ENCODE measurements at regions of chr3 and their contacts with region 1.

Region 1: GRCh38 chr3:48685602-48686511 is at the start of gene NCKIPSD:
- DNase-seq: peak; percentile 94
- ATAC-seq: peak; percentile 92
- H3K4me3 Mint-ChIP-seq: peak within 1 kb of the TSS; percentile 90
- H3K27ac Mint-ChIP-seq: peak within 1 kb of the TSS; percentile 86
- H3K4me1 Mint-ChIP-seq: peaks cover 30% of the 10 kb centered on the region
- H3K27me3 Mint-ChIP-seq: no peaks in the 10 kb centered on the region
- CTCF ChIP-seq: peak; percentile 24
- total RNA-seq, gene NCKIPSD: 9.2 and 9.7 TPM in 2 replicates

Region 2: GRCh38 chr3:48400824-48401433 is 284.9 kb before region 1 on chr3:
- CTCF ChIA-PET with region 1: interaction called, 5 read pairs
- POLR2A ChIA-PET with region 1: no interaction called
- intact Hi-C with region 1: loop called (anchors 1 kb)
- DNase-seq: peak; percentile 24
- ATAC-seq: peak; percentile 94
- H3K4me3 Mint-ChIP-seq: no peak overlapping the region
- H3K27ac Mint-ChIP-seq: no peak overlapping the region
- H3K4me1 Mint-ChIP-seq: no peaks in the 10 kb centered on the region
- H3K27me3 Mint-ChIP-seq: peaks cover under 1% of the 10 kb centered on the region
- CTCF ChIP-seq: peak; percentile 41

Region 3: GRCh38 chr3:48609088-48610005 is 76.5 kb before region 1 on chr3 and contains the start of gene UQCRC1:
- CTCF ChIA-PET with region 1: no interaction called
- POLR2A ChIA-PET with region 1: interaction called, 7 read pairs
- intact Hi-C with region 1: loop called (anchors 1 kb)
- DNase-seq: peak; percentile 89
- ATAC-seq: peak; percentile 99
- H3K4me3 Mint-ChIP-seq: peak within 1 kb of the TSS; percentile 98
- H3K27ac Mint-ChIP-seq: peak within 1 kb of the TSS; percentile 93
- H3K4me1 Mint-ChIP-seq: peaks cover 18% of the 10 kb centered on the region
- H3K27me3 Mint-ChIP-seq: no peaks in the 10 kb centered on the region
- CTCF ChIP-seq: no peak
- total RNA-seq, gene UQCRC1: 117 and 118 TPM in 2 replicates

Region 4: GRCh38 chr3:48656061-48656840 is 29.6 kb before region 1 on chr3:
- CTCF ChIA-PET with region 1: no interaction called
- POLR2A ChIA-PET with region 1: no interaction called
- intact Hi-C with region 1: loop called (anchors 1 kb)
- DNase-seq: peak; percentile 83
- ATAC-seq: peak; percentile 85
- H3K4me3 Mint-ChIP-seq: peak overlapping the region; percentile 78
- H3K27ac Mint-ChIP-seq: no peak overlapping the region
- H3K4me1 Mint-ChIP-seq: peaks cover 14% of the 10 kb centered on the region
- H3K27me3 Mint-ChIP-seq: peaks cover 11% of the 10 kb centered on the region
- CTCF ChIP-seq: no peak

Region 5: DNA sequence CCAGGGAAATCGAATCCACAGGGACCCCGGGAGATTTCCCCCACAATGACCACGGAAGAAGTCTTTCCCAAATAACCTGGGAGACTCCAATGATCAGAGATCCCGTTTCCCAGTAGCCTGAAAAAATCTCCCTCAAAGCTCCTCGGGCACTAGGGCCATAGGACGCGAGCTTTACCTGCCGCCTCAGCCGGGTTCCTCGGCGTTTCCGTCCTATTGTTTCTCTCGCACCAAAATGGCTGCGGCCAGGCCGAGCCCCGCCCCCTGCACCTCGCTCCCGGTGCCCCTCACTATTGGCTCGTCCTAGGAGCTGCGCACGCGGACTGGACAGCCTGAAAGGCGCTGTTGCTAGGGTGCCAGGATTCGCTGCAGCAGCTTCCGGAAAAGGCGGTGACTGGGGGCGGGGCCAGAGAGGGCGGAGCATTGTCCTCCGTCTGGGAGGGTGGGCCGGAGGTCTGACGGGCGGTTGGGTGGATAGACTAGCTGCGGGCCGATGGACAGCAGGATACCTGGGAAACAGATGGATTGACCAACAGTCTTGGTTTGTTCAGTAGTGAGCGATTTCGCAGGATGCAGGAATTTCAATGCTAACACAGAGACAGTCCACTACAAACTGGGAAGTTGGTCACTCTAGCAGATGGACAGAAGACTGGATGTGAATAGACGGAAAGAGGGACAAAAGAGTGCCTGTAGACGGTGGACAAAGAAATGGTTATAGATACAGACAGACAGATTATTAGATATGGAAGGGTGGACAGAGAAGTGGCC is 31.3 kb after region 1 on chr3 and contains the start of gene IP6K2:
- CTCF ChIA-PET with region 1: no interaction called
- POLR2A ChIA-PET with region 1: interaction called, 5 read pairs
- intact Hi-C with region 1: loop called (anchors 1 kb)
- DNase-seq: peak; percentile 98
- ATAC-seq: peak; percentile 99
- H3K4me3 Mint-ChIP-seq: peak within 1 kb of the TSS; percentile 98
- H3K27ac Mint-ChIP-seq: peak within 1 kb of the TSS; percentile 94
- H3K4me1 Mint-ChIP-seq: peaks cover 37% of the 10 kb centered on the region
- H3K27me3 Mint-ChIP-seq: peaks cover 4% of the 10 kb centered on the region
- CTCF ChIP-seq: no peak
- total RNA-seq, gene IP6K2: 83.2 and 94.1 TPM in 2 replicates

Region 6: GRCh38 chr3:48756640-48757039 is 70.8 kb after region 1 on chr3:
- CTCF ChIA-PET with region 1: no interaction called
- POLR2A ChIA-PET with region 1: no interaction called
- intact Hi-C with region 1: no loop called
- DNase-seq: no peak
- ATAC-seq: no peak
- H3K4me3 Mint-ChIP-seq: no peak overlapping the region
- H3K27ac Mint-ChIP-seq: no peak overlapping the region
- H3K4me1 Mint-ChIP-seq: no peaks in the 10 kb centered on the region
- H3K27me3 Mint-ChIP-seq: no peaks in the 10 kb centered on the region
- CTCF ChIP-seq: no peak

Region 7: GRCh38 chr3:48918388-48919214 is 232.7 kb after region 1 on chr3 and contains the start of gene ARIH2:
- CTCF ChIA-PET with region 1: no interaction called
- POLR2A ChIA-PET with region 1: no interaction called
- intact Hi-C with region 1: loop called (anchors 1 kb)
- DNase-seq: peak; percentile 91
- ATAC-seq: peak; percentile 85
- H3K4me3 Mint-ChIP-seq: peak within 1 kb of the TSS; percentile 99
- H3K27ac Mint-ChIP-seq: peak within 1 kb of the TSS; percentile 98
- H3K4me1 Mint-ChIP-seq: peaks cover 32% of the 10 kb centered on the region
- H3K27me3 Mint-ChIP-seq: no peaks in the 10 kb centered on the region
- CTCF ChIP-seq: no peak
- total RNA-seq, gene ARIH2: 96.6 and 112 TPM in 2 replicates

Measured in activated B cell treated with CpG ODN at 0.5 μM for 24 hours (primary cell).